H1 (cell line): ENCODE measurements at regions of chr1 and their contacts with region 1.

Region 1: GRCh38 chr1:44609412-44609767 is 64.9 kb downstream of the TMEM53 start:
- DNase-seq: peak; percentile 67 to 93
- H3K4me3 ChIP-seq: no peak overlapping the region
- H3K27ac ChIP-seq: no peak overlapping the region
- H3K4me1 ChIP-seq: peaks cover 2 to 18% (median 11%) of the 10 kb centered on the region in 4 experiments; a peak in 6 of 7 replicates
- H3K27me3 ChIP-seq: no peaks in the 10 kb centered on the region
- CTCF ChIP-seq: peak; percentile 78 to 86 (median 84)
- EP300 ChIP-seq: no peak
- POLR2A ChIP-seq: no peak
- RAD21 ChIP-seq: peak; percentile 71 to 83

Region 2: GRCh38 chr1:44423591-44424537 is 185.5 kb before region 1 on chr1:
- CTCF ChIA-PET with region 1: interaction called, 10 read pairs
- POLR2A ChIA-PET with region 1: no interaction called
- DNase-seq: no peak
- H3K4me3 ChIP-seq: no peak overlapping the region
- H3K27ac ChIP-seq: no peak overlapping the region
- H3K4me1 ChIP-seq: peaks cover 5 to 36% (median 25%) of the 10 kb centered on the region in 4 experiments
- H3K27me3 ChIP-seq: no peaks in the 10 kb centered on the region; a peak in 1 of 7 replicates
- CTCF ChIP-seq: no peak
- EP300 ChIP-seq: no peak
- POLR2A ChIP-seq: no peak
- RAD21 ChIP-seq: no peak

Region 3: DNA sequence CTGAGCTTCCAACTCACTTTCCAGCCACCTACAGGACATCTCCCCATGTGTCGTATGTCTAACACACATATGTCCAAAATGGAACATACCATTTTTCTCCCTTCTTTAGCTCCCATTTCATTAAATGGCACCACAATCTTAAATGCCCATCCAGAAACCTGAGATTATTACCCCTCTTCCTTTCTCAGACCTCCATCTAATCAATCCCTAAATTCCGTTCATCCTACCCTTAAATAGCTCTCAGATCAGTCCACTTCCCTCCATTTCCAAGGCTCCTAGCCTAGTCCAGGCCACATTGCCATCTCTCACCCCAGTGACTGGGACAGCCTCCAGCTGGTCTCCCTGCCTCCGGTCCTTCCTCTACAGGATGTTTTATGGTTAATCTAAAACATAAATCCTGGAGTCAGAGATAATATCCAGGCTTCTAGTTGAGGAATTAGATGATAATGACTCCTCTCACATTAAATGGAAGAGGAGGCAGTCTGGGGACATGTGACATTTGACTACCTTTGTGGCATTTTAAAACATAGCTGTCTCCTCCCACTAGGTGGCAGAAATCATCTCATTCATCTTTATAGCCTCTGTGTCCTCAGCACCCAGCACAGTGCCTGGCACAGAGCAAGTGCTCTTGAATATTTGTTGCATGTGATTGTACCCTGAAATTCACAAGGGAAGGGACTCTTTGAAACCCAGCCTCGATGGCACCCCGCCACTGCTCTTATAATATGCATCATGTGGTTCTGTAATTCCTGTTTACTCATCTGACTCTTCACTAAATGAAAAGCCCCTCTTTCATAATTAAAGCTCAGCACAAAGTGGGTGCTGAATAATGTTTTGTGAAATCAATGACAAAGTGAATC is 37.4 kb before region 1 on chr1:
- CTCF ChIA-PET with region 1: interaction called, 25 read pairs
- POLR2A ChIA-PET with region 1: no interaction called
- DNase-seq: no peak
- H3K4me3 ChIP-seq: no peak overlapping the region
- H3K27ac ChIP-seq: no peak overlapping the region
- H3K4me1 ChIP-seq: peaks cover 4 to 6% (median 5%) of the 10 kb centered on the region in 4 experiments; a peak in 6 of 7 replicates
- H3K27me3 ChIP-seq: no peaks in the 10 kb centered on the region
- CTCF ChIP-seq: peak in 2 of 3 experiments; percentile 39 to 68; a peak in 3 of 4 replicates
- EP300 ChIP-seq: no peak
- POLR2A ChIP-seq: no peak
- RAD21 ChIP-seq: peak; percentile 18 to 49; a peak in 2 of 4 replicates

Region 4: GRCh38 chr1:44624268-44624901 is 15.0 kb after region 1 on chr1:
- CTCF ChIA-PET with region 1: interaction called, 31 read pairs
- POLR2A ChIA-PET with region 1: interaction called, 4 read pairs
- DNase-seq: no peak
- H3K4me3 ChIP-seq: no peak overlapping the region
- H3K27ac ChIP-seq: no peak overlapping the region
- H3K4me1 ChIP-seq: no peaks in the 10 kb centered on the region
- H3K27me3 ChIP-seq: no peaks in the 10 kb centered on the region
- CTCF ChIP-seq: no peak
- EP300 ChIP-seq: no peak
- POLR2A ChIP-seq: no peak
- RAD21 ChIP-seq: no peak

Region 5: DNA sequence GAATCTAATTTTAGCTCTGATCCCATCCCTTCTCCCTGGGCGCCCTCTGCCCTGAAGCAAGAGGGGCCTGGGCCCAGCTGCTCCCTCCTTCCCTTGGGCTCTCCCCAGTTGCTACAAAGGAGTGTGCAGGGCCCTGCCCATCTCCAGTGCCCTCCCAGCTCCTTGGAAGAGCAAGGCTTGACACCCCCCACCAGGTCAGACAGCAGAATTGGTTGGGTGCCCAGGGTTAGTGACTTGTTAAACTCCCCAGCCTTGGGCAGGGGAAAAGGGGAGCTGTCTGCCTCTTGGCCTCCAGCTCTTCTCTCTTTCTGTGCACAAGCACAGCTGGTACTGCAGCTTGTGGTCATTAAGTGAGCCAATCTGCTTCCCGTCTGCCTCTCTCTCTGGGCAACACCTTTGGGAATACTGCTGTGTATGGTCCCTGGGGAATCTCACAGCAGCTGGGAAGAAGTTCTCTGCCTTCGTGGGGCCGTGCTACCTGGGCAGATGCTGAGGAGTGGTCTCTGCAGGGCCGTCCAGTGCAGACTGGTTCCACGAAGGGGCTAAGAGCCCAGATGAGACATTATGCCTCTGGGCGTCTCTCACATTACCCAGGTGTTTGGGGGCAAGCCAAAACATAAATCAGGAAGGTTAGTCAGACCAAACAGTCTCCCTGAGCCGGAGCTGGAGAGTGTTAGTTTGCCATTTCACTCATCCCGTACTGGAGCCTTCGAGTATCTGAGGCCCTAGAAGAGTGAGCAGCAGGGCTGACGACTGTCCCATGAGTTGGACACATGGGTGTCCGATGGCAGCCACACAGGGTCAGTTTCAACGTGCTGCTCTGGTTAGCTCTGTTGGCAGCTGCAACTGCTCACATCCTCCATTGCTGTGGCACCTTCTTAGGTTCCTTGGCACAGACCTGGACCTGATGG is 27.6 kb after region 1 on chr1:
- CTCF ChIA-PET with region 1: interaction called, 127 read pairs
- POLR2A ChIA-PET with region 1: interaction called, 633 read pairs
- DNase-seq: no peak
- H3K4me3 ChIP-seq: no peak overlapping the region
- H3K27ac ChIP-seq: no peak overlapping the region
- H3K4me1 ChIP-seq: peaks cover 0 to 5% (median 3%) of the 10 kb centered on the region in 4 experiments; a peak in 4 of 7 replicates
- H3K27me3 ChIP-seq: no peaks in the 10 kb centered on the region
- CTCF ChIP-seq: no peak
- EP300 ChIP-seq: no peak
- POLR2A ChIP-seq: no peak
- RAD21 ChIP-seq: no peak

Region 6: DNA sequence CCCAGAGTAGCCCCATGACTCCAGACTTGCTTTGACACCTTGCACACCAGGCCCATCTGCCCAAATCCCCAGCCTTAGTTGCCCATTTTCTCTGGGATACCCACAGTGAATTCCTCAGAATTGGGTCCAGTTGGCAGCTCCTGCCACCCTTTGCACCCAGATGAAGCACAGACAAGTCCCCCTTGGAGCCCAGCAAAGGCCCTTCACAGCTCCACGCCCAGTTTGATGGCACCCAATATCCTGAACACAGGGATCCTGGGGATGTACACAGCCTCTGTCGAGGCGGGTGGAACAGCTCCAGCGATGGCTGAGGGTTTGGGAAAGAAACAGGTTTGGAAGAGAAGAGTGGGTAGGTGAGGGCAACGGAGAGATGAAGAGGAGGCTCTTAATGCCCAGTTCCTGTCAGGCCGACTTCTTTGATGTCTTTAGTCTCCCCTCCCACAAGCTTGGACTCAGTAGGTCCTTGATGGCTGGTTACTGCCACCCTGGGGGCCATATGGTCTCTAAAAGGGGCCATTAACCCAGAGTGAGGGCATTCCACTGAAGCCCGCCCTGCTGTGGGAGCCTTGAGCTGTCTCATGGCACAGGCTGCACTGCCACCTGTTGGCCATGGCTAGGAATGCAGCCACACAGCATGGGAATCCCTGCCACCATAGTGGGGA is 43.2 kb after region 1 on chr1:
- CTCF ChIA-PET with region 1: interaction called, 129 read pairs
- POLR2A ChIA-PET with region 1: interaction called, 633 read pairs
- DNase-seq: peak; percentile 69 to 94
- H3K4me3 ChIP-seq: no peak overlapping the region
- H3K27ac ChIP-seq: 0 out of 2 replicates have a peak overlapping the region, but pooled peaks have one; percentile 20
- H3K4me1 ChIP-seq: peaks cover 0 to 17% (median 9%) of the 10 kb centered on the region in 4 experiments; a peak in 5 of 7 replicates
- H3K27me3 ChIP-seq: no peaks in the 10 kb centered on the region
- CTCF ChIP-seq: peak; percentile 94 to 100 (median 99)
- EP300 ChIP-seq: no peak
- POLR2A ChIP-seq: no peak
- RAD21 ChIP-seq: peak; percentile 93 to 95

Region 7: DNA sequence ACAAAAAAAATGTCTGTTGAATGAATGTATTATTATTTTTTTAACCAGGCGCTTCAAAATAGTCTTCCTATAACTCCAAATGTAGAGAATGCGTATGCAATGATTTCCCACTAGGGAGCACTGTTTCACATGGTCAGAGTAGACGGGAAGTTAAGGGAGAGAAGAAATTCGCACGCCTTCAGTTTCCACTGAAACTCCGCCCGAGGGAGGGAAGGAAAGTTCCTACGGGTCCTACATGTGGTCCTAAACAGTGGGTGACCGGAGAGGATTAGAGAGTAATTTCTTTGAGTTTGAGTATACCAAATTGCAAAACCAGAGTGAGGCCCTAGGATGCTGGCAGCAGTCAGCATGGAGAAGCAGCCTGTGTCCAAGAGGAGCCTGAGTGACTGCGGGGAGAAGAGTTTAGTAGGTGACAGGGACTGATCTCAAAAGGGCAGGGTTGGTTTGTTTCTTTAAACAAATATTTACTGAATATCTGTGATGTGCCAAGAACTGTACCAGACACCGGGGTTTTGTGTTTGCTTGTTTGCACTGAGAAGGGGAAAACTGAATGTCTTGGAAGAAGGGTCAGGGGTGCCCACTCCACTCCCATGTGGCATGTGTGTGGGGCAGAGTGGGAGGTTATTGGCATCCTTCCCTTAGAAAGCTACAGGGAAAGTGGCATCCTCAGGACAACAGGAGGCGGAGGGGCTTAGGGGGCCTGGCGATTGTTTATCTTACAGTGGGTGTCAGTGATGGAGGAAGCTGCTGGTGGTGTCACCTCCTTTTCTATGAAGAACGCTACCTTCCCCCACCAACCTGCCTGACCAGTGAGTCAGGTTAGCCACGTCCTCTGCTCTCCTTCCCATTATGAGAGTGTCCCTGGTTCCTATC is 98.8 kb after region 1 on chr1:
- CTCF ChIA-PET with region 1: no interaction called
- POLR2A ChIA-PET with region 1: no interaction called
- DNase-seq: no peak
- H3K4me3 ChIP-seq: no peak overlapping the region
- H3K27ac ChIP-seq: no peak overlapping the region
- H3K4me1 ChIP-seq: peaks cover 0 to 5% (median 1%) of the 10 kb centered on the region in 4 experiments; a peak in 3 of 7 replicates
- H3K27me3 ChIP-seq: peaks cover 0 to 4% (median 0%) of the 10 kb centered on the region in 4 experiments; a peak in 1 of 7 replicates
- CTCF ChIP-seq: peak in 2 of 3 experiments; percentile 47 to 58; a peak in 2 of 4 replicates
- EP300 ChIP-seq: no peak
- POLR2A ChIP-seq: no peak
- RAD21 ChIP-seq: peak; percentile 48 to 53; a peak in 3 of 4 replicates

Region 8: DNA sequence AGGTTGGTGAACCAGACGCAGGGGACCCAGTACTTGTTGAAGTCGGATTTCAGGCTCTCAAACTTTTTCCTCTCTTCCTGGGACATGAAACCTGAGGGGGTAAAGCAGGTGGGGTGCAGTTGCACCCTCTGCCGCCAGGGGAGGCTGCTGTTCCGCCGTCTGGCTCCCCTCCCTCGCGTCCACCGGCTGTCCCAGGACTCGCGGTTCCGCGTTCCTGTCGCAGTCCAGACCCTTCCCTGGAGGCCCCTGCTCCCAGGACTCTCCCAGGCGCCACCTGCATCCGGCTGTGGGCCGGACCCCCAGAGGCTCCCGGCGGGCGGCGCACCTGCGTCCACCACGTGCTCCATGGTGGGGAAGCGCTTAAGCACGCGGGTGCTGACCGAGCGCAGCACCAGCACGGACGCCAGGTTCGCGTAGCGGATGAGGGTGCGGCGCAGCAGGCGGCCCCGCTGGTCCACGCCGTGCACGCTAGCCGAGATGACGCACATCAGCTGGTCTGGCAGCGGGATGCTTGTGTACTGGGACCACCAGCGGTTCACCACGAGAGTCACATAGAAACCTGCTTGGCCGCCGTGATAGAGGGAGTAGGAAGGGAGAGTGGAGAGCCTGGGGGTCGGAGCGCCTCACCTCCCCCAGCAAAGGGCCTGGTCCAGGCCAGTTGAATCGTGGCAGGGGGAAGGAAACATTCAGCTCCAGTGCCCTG is 176.9 kb after region 1 on chr1:
- CTCF ChIA-PET with region 1: no interaction called
- POLR2A ChIA-PET with region 1: no interaction called
- DNase-seq: peak in 1 of 2 experiments; percentile 94
- H3K4me3 ChIP-seq: peak overlapping the region; percentile 17 to 58 (median 46)
- H3K27ac ChIP-seq: no peak overlapping the region
- H3K4me1 ChIP-seq: peaks cover 4 to 18% (median 14%) of the 10 kb centered on the region in 4 experiments
- H3K27me3 ChIP-seq: peaks cover 0 to 7% (median 2%) of the 10 kb centered on the region in 4 experiments; a peak in 3 of 7 replicates
- CTCF ChIP-seq: peak; percentile 80 to 100 (median 100)
- EP300 ChIP-seq: peak in 1 of 2 experiments; percentile 98; a peak in 1 of 3 replicates
- POLR2A ChIP-seq: peak in 1 of 2 experiments; percentile 50; a peak in 1 of 3 replicates
- RAD21 ChIP-seq: peak; percentile 83 to 84

Region 9: GRCh38 chr1:44862829-44863401 is 253.5 kb after region 1 on chr1:
- CTCF ChIA-PET with region 1: no interaction called
- POLR2A ChIA-PET with region 1: no interaction called
- DNase-seq: no peak
- H3K4me3 ChIP-seq: no peak overlapping the region
- H3K27ac ChIP-seq: no peak overlapping the region
- H3K4me1 ChIP-seq: no peaks in the 10 kb centered on the region
- H3K27me3 ChIP-seq: no peaks in the 10 kb centered on the region
- CTCF ChIP-seq: no peak
- EP300 ChIP-seq: no peak
- POLR2A ChIP-seq: no peak
- RAD21 ChIP-seq: no peak